OCI-LY7 (cell line): ENCODE measurements at regions of chr7 and their contacts with region 1.

Region 1: GRCh38 chr7:25894902-25895791 is 256.9 kb upstream of the NFE2L3 start:
- DNase-seq: peak; percentile 70
- H3K4me3 ChIP-seq: peak overlapping the region; percentile 15
- H3K27ac ChIP-seq: peak overlapping the region; percentile 19
- H3K4me1 ChIP-seq: peaks cover 35% of the 10 kb centered on the region
- CTCF ChIP-seq: peak; percentile 81

Region 2: DNA sequence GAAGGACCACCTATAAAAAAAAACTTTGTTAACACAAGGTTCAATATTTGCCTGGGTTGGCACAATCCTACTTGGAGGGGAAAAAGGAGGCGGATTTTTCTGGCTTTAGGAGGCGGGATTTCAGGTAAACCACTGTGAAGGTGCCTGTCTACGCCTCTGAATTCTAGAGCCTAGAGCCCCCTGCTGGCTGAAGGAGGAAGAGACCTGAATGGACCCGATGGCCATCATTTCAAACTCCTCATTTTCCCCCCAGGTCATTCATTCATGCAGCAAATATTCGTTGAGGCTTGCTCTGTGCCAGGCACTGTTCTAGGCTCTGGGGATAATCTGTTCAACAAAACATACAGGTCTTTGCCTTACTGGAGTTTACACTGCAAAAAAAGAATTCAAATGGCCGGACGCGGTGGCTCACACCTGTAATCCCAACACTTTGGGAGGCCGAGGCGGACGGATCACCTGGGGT is 166.6 kb after region 1 on chr7:
- CTCF ChIA-PET with region 1: no interaction called
- POLR2A ChIA-PET with region 1: interaction called, 4 read pairs
- intact Hi-C with region 1: loop called (anchors 1 kb)
- DNase-seq: peak; percentile 75
- H3K4me3 ChIP-seq: no peak overlapping the region
- H3K27ac ChIP-seq: no peak overlapping the region
- H3K4me1 ChIP-seq: no peaks in the 10 kb centered on the region
- CTCF ChIP-seq: peak; percentile 94

Region 3: GRCh38 chr7:26278770-26279169 is 383.6 kb after region 1 on chr7:
- CTCF ChIA-PET with region 1: no interaction called
- POLR2A ChIA-PET with region 1: no interaction called
- intact Hi-C with region 1: loop called (anchors 5 kb)
- DNase-seq: peak; percentile 70
- H3K4me3 ChIP-seq: no peak overlapping the region
- H3K27ac ChIP-seq: no peak overlapping the region
- H3K4me1 ChIP-seq: no peaks in the 10 kb centered on the region
- CTCF ChIP-seq: peak; percentile 96

Region 4: DNA sequence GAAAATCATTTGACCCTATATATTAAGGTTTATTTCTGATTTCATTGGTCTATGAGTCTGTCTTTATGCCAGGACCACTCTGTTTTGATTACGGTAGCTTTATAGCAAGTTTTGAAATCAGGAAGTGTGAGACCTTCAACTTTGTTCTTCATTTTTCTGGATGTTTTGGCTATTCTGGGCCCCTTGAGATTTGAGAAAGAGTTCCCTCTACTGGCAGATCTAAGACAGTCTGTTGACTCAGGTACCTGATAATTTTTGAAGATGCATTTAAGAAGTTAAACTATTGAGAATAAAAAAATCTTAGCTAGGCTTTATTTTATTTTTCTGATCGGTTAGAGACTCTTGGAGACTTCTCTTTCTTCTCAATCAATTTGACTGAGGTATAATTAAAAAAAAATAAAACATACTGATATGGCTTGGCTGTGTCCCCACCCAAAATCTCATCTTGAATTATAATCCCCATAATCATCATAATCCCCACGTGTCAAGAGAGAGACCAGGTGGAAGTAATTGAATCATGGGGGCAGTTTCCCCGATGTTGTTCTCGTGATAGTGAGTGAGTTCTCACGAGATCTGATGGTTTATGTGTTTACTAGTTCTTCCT is 605.7 kb after region 1 on chr7:
- CTCF ChIA-PET with region 1: no interaction called
- POLR2A ChIA-PET with region 1: no interaction called
- intact Hi-C with region 1: loop called (anchors 5 kb)
- DNase-seq: peak; percentile 72
- H3K4me3 ChIP-seq: no peak overlapping the region
- H3K27ac ChIP-seq: no peak overlapping the region
- H3K4me1 ChIP-seq: no peaks in the 10 kb centered on the region
- CTCF ChIP-seq: peak; percentile 90

Region 5: DNA sequence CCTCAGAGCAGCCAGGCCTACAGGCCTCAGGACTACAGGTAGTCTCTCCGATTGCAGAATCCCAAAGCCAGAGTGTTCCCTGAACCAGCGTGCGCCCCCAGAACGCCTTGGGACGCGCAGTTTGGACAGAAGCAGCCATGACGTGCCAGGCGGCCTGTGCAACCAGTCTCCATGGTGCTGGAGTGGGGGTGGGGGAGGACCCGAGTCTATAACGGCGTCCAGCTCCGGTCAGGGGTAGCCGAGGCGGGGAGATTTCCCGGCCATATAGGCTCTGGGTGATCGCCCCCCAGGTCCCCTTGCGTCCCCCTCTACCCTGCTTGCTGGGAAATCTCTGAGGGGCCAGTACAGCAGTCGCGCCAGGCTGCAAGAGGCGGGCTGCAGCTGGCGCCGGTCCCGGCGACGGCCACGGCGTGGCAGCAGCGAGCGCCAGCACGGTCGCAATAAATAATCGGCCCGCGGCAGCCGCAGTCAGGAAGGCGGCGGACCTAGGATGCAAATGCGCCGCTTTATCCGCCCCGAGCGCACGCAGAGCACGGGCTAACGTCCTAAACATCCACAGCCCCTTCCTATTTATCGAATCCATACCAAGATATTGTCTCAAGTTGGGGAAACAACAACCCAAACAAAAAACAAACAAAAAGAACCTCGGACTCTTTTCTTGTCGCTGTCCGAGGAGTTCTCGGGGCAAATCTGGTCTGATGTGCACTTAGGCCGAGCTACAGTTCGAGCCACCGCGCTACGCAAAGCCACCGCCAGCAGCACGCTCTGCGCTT is 1255.6 kb after region 1 on chr7:
- CTCF ChIA-PET with region 1: no interaction called
- POLR2A ChIA-PET with region 1: no interaction called
- intact Hi-C with region 1: loop called (anchors 10 kb)
- DNase-seq: peak; percentile 86
- H3K4me3 ChIP-seq: peak overlapping the region; percentile 75
- H3K27ac ChIP-seq: no peak overlapping the region
- H3K4me1 ChIP-seq: peaks cover 48% of the 10 kb centered on the region
- CTCF ChIP-seq: peak; percentile 84